Colonic mucosa (tissue), 4 donors: ENCODE measurements at regions of chr3 and their contacts with region 1.

Region 1: DNA sequence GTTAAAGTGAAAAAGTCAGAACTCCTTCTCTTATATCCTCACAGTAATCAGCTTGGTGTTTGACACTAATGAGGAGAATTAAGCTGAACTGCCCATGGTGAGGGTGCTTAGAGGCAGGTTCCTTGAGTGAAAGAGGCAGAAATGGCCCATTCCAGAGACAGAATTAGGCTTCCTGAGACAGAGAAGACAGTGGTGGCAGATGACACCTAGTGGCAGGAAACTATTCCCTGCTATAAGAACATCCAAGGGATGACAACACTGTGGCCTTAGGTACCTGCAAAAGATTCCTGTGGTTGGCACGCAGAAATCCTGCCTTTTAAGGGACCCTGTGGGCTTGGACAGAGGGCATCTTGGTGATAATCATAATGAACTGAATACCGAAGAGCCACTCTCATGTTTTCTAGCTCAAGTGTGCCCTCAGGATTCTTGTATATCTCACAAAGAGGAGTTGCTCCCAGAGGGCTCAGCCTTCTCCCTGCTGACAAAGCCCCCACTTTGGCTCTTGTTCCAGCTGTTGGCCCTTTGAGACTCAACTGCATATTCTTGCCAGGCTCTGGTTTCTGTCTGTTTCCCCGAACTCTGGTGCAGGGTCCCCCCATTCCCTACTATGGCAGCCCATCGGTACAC is 56.0 kb downstream of the KBTBD12 start:
- DNase-seq: peak; percentile 43
- H3K4me3 ChIP-seq: no peak overlapping the region
- H3K27ac ChIP-seq: no peak overlapping the region
- H3K4me1 ChIP-seq: no peaks in the 10 kb centered on the region
- H3K27me3 ChIP-seq: no peaks in the 10 kb centered on the region
- CTCF ChIP-seq: peak; percentile 55

Region 2: GRCh38 chr3:127652231-127652995 is 318.7 kb before region 1 on chr3:
- intact Hi-C with region 1: loop called (anchors 5 kb)
- DNase-seq: no peak
- H3K4me3 ChIP-seq: no peak overlapping the region
- H3K27ac ChIP-seq: no peak overlapping the region
- H3K4me1 ChIP-seq: no peaks in the 10 kb centered on the region
- H3K27me3 ChIP-seq: no peaks in the 10 kb centered on the region
- CTCF ChIP-seq: peak; percentile 88